ENCODE measurements at regions of chr4 and their contacts with region 1.

Region 1: DNA sequence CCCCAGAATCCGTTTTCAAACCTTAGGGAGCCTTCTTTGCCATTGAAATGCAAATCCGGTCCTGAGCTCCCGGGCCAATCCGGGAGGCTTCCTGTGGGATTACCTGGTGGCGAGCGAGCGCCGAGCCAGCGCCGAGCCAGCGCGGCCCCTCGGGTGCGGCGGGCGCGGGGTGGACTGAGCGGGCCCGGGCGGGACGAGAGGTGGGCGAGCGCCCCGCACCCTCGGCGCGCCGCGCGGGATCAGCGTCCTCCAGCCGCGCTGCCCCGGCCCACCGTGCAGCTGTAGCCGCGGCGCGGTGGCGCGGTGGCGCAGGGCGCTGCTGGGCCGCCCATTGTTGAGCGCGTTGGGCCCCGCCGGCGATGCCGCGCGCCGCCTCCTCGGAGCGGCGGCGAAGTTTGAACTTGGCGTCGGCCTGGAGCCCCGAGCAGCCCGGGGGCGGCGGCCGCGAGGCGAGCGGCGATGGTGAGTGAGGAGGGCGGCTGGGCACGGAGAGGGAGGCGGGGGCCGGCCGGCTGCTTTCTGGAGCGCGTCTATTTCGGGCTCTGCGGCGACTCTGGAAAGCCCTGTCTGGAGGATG is 208.6 kb downstream of the SOWAHB start:
- DNase-seq: peak; percentile 65 to 88
- ATAC-seq: peak; percentile 73
- H3K4me3 ChIP-seq: peak overlapping the region; percentile 65 to 93
- H3K27ac ChIP-seq: peak overlapping the region; percentile 77 to 97
- H3K4me1 ChIP-seq: peaks cover 0 to 9% of the 10 kb centered on the region in 2 donors
- H3K27me3 ChIP-seq: no peaks in the 10 kb centered on the region

Region 2: DNA sequence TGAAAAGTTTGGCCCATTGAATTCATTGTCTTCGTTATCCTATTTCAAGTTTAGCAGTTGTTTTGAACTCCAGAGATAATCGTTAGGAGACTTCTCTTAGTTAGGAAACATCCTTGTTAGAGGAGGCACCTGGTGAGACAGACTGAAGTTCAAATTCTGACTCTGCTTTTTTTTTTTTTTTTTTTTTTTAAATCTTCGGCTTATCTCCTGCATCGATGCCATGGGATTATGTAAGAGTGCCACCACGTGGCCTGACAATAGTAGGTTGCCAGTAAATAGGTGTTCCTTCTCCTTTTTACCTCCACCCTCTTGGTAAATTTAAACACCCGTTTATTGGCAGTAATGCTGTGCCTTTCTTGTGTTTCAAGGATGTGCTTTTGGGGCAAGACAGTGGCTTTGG is 59.3 kb after region 1 on chr4:
- intact Hi-C with region 1: loop called in 1 of 2 experiments (anchors 5 kb)
- DNase-seq: no peak
- ATAC-seq: no peak
- H3K4me3 ChIP-seq: no peak overlapping the region
- H3K27ac ChIP-seq: peak overlapping the region in 1 of 2 donors; percentile 21
- H3K4me1 ChIP-seq: peaks cover 0 to 4% of the 10 kb centered on the region in 2 donors
- H3K27me3 ChIP-seq: no peaks in the 10 kb centered on the region

Region 3: GRCh38 chr4:76758290-76758882 is 69.1 kb after region 1 on chr4:
- intact Hi-C with region 1: loop called in 1 of 2 experiments (anchors 5 kb)
- DNase-seq: no peak
- ATAC-seq: peak; percentile 74
- H3K4me3 ChIP-seq: no peak overlapping the region
- H3K27ac ChIP-seq: peak overlapping the region in 1 of 2 donors; percentile 70
- H3K4me1 ChIP-seq: peaks cover 0 to 4% of the 10 kb centered on the region in 2 donors
- H3K27me3 ChIP-seq: no peaks in the 10 kb centered on the region

Measured in aorta (tissue), 5 donors.